Activated CD4-positive, alpha-beta T cell treated with anti-CD3 and anti-CD28 coated beads for 36 hours (primary cell): ENCODE measurements at regions of chr6 and their contacts with region 1.

Region 1: GRCh38 chr6:57316581-57317059 is 810 bp upstream of the PRIM2 start:
- DNase-seq: peak; percentile 90
- ATAC-seq: peak; percentile 88
- H3K4me3 Mint-ChIP-seq: peak overlapping the region; percentile 99
- H3K27ac Mint-ChIP-seq: peak overlapping the region; percentile 98
- H3K4me1 Mint-ChIP-seq: peaks cover 31% of the 10 kb centered on the region
- H3K27me3 Mint-ChIP-seq: no peaks in the 10 kb centered on the region

Region 2: DNA sequence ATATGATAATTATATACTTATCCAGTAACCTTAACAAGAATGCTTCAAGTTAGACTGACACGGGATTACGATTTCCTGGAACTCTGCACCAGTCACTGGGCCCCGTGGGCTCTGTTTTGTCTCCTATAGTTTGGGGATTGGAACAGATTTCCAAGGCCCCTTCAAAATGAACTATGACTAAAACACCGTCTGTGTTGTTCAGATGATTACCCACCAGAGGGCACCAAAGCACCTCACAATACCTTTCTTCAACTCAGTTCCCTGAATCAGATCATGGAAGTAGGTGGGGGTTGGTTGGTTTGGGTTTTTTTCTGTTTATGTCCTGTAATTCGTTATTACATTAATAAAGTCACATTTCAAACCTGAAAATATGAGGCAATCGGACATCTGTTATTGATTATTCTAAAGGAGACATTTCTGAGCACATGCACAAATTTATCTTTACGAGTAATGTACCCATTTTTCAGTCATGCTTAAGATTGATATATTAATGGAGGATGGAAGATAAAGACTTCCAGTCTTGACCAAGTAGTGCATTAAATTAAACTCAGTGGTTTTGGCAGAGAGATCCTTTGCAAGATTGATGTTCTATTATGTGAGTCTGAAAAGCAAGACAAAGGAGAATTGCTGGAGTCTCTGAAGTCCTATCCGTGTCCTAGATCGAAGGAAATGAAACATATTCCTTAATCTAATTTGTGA is 957.3 kb before region 1 on chr6:
- CTCF ChIA-PET with region 1: no interaction called
- POLR2A ChIA-PET with region 1: no interaction called
- intact Hi-C with region 1: loop called in 1 of 2 experiments (anchors 5 kb)
- DNase-seq: peak; percentile 75
- ATAC-seq: no peak
- H3K4me3 Mint-ChIP-seq: no peak overlapping the region
- H3K27ac Mint-ChIP-seq: no peak overlapping the region
- H3K4me1 Mint-ChIP-seq: no peaks in the 10 kb centered on the region
- H3K27me3 Mint-ChIP-seq: peaks cover 1% of the 10 kb centered on the region

Region 3: DNA sequence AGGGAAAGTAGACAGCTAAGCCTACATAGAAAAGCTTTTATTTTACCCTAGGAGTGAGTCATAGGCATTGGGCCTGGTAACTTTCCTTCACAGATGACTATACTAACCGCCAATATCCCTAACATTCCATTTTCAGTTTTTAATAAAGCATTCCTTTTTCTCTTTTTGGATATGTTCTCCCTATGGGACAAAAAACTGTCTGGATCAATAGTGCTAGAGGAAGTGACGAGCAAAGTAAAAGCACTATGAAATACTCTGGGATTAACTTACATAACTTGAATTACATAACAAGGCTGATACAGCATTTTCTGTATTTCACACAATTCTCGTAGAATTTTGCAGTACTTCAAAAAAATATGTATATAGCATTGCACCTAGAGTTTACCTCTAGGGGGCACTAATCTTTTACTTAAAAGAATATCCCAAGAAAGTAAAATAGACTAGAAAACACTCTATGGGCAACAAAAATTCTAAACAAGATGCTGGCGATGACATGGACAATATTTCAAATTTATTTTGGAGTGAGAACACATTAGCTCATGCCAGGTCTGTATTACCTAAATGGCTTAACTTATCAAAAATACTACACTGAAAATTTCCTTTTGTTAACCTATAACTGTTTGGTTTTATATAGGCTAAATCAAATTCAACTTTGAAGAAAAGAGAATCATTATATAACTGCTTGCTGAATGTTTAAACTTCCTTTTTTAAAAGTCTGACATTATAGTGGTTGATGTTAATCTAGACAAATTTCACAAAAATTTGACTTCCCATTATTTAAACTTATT is 607.6 kb before region 1 on chr6:
- CTCF ChIA-PET with region 1: no interaction called
- POLR2A ChIA-PET with region 1: no interaction called
- intact Hi-C with region 1: loop called in 1 of 2 experiments (anchors 5 kb)
- DNase-seq: no peak
- ATAC-seq: no peak
- H3K4me3 Mint-ChIP-seq: no peak overlapping the region
- H3K27ac Mint-ChIP-seq: no peak overlapping the region
- H3K4me1 Mint-ChIP-seq: no peaks in the 10 kb centered on the region
- H3K27me3 Mint-ChIP-seq: peaks cover 2% of the 10 kb centered on the region

Region 4: GRCh38 chr6:57021086-57021720 is 295.4 kb before region 1 on chr6:
- CTCF ChIA-PET with region 1: interaction called, 5 read pairs
- POLR2A ChIA-PET with region 1: no interaction called
- intact Hi-C with region 1: loop called in 1 of 2 experiments (anchors 2 kb)
- DNase-seq: no peak
- ATAC-seq: peak; percentile 39
- H3K4me3 Mint-ChIP-seq: no peak overlapping the region
- H3K27ac Mint-ChIP-seq: no peak overlapping the region
- H3K4me1 Mint-ChIP-seq: no peaks in the 10 kb centered on the region
- H3K27me3 Mint-ChIP-seq: peaks cover 2% of the 10 kb centered on the region

Region 5: GRCh38 chr6:57172136-57173055 is 144.2 kb before region 1 on chr6 and contains the start of gene BAG2:
- CTCF ChIA-PET with region 1: interaction called, 17 read pairs
- POLR2A ChIA-PET with region 1: no interaction called
- intact Hi-C with region 1: loop called (anchors 1 to 2 kb)
- DNase-seq: peak; percentile 94
- ATAC-seq: peak; percentile 89
- H3K4me3 Mint-ChIP-seq: peak within 1 kb of the TSS; percentile 87
- H3K27ac Mint-ChIP-seq: peak within 1 kb of the TSS; percentile 96
- H3K4me1 Mint-ChIP-seq: peaks cover 35% of the 10 kb centered on the region
- H3K27me3 Mint-ChIP-seq: no peaks in the 10 kb centered on the region
- total RNA-seq, gene BAG2: 8.2 to 8.8 TPM

Region 6: GRCh38 chr6:57267586-57268293 is 48.9 kb before region 1 on chr6:
- CTCF ChIA-PET with region 1: interaction called, 17 read pairs
- POLR2A ChIA-PET with region 1: interaction called, 3 read pairs
- intact Hi-C with region 1: loop called (anchors 1 kb)
- DNase-seq: peak; percentile 62
- ATAC-seq: peak; percentile 52
- H3K4me3 Mint-ChIP-seq: no peak overlapping the region
- H3K27ac Mint-ChIP-seq: no peak overlapping the region
- H3K4me1 Mint-ChIP-seq: peaks cover 27% of the 10 kb centered on the region
- H3K27me3 Mint-ChIP-seq: peaks cover 14% of the 10 kb centered on the region